Psoas muscle (tissue), 8 donors: ENCODE measurements at regions of chr13 and their contacts with region 1.

Region 1: DNA sequence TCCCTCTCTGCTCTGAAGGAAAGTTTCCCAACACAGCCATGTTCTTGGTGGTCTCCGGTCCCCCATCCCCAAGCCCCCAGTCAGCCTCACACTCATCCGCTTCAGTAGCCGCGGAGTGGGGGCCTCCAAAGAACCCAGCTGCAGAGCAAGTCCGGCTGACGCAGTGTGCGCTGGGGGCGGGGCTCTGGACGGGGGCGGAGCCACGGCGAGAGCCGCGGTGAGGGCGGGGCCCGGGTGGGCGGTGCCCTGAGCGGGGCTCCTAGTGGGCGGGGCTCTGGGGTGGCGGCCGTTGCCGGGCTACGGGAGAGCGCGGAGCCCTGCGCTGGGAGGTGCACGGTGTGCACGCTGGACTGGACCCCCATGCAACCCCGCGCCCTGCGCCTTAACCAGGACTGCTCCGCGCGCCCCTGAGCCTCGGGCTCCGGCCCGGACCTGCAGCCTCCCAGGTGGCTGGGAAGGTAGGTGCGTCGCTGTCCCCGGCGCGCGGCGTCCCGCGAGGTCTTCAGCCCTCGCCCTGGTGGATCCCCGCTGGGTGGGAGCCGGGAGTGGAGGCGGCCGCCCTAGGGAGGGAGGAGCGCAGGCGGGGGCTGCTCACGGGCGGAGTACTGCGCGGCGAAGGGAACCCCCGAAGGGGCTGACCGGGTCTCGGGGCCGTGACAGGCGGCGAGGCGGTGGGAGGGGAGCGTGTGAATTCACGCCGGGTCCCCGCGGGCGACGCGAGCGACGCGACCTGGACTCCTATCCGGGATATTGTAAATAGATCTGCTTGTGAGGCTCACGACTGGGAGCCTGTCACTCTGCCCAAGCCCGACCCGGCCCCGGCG is 9.1 kb downstream of the TNFRSF19 start:
- DNase-seq: peak; percentile 91 to 96
- ATAC-seq: peak; percentile 99 to 100 (median 100)
- H3K4me3 ChIP-seq: peak overlapping the region; percentile 91
- H3K27ac ChIP-seq: peak overlapping the region; percentile 85
- H3K4me1 ChIP-seq: no peaks in the 10 kb centered on the region
- H3K27me3 ChIP-seq: peaks cover 0 to 3% (median 0%) of the 10 kb centered on the region in 3 donors
- CTCF ChIP-seq: no peak

Region 2: GRCh38 chr13:23488458-23488857 is 90.8 kb before region 1 on chr13:
- intact Hi-C with region 1: loop called in 1 of 2 experiments (anchors 5 kb)
- DNase-seq: no peak
- ATAC-seq: peak; percentile 93 to 97 (median 96)
- H3K4me3 ChIP-seq: no peak overlapping the region
- H3K27ac ChIP-seq: peak overlapping the region; percentile 56
- H3K4me1 ChIP-seq: no peaks in the 10 kb centered on the region
- H3K27me3 ChIP-seq: no peaks in the 10 kb centered on the region
- CTCF ChIP-seq: no peak

Region 3: GRCh38 chr13:23871616-23872220 is 292.4 kb after region 1 on chr13:
- intact Hi-C with region 1: loop called (anchors 5 to 10 kb)
- DNase-seq: no peak
- ATAC-seq: peak in 3 of 4 donors; percentile 50 to 79 (median 54)
- H3K4me3 ChIP-seq: no peak overlapping the region
- H3K27ac ChIP-seq: no peak overlapping the region
- H3K4me1 ChIP-seq: peaks cover 7% of the 10 kb centered on the region
- H3K27me3 ChIP-seq: no peaks in the 10 kb centered on the region
- CTCF ChIP-seq: peak; percentile 72

Region 4: GRCh38 chr13:25286969-25287961 is 1708.0 kb after region 1 on chr13 and contains the start of gene MTMR6:
- intact Hi-C with region 1: no loop called
- DNase-seq: peak; percentile 92 to 97
- ATAC-seq: peak; percentile 98 to 99 (median 99)
- H3K4me3 ChIP-seq: peak within 1 kb of the TSS; percentile 99
- H3K27ac ChIP-seq: peak within 1 kb of the TSS; percentile 92
- H3K4me1 ChIP-seq: peaks cover 8% of the 10 kb centered on the region
- H3K27me3 ChIP-seq: no peaks in the 10 kb centered on the region
- CTCF ChIP-seq: peak; percentile 100
- total RNA-seq, gene MTMR6: 13.6 to 15.8 (median 15.6) TPM